ENCODE measurements at regions of chr17 and their contacts with region 1.

Region 1: GRCh38 chr17:78226749-78227399 is 4.6 kb upstream of the TMEM235 start:
- DNase-seq: no peak

Region 2: DNA sequence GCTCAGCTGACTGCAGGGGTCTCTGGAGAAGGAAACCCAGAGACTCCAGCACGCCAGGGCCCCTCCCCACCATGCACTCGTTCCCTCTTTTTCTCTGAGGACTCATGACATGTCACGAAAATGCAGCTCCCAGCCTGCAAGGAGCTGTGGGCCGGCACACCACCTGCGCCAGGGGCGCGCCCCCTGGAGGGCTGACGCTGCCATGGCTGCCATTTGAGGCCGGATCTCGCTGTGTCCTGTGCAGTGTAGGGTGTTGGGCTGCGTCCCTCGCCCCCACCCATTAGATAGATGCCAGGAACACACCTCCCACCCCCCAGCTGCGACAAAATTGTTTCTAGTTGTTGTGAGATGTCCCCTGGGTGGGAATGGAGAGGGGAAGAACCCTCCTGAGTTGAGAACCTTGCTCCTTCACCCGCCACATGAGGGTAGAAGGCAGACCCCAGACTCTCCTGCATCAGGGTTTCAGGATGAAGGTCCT is 50.3 kb before region 1 on chr17:
- CTCF ChIA-PET with region 1: no interaction called
- POLR2A ChIA-PET with region 1: no interaction called
- DNase-seq: peak; percentile 82

Region 3: GRCh38 chr17:78214706-78215061 is 12.2 kb before region 1 on chr17:
- CTCF ChIA-PET with region 1: no interaction called
- POLR2A ChIA-PET with region 1: interaction called, 14 read pairs
- DNase-seq: no peak

Measured in HEK293T (cell line).